ENCODE measurements at regions of chr19 and their contacts with region 1.

Region 1: DNA sequence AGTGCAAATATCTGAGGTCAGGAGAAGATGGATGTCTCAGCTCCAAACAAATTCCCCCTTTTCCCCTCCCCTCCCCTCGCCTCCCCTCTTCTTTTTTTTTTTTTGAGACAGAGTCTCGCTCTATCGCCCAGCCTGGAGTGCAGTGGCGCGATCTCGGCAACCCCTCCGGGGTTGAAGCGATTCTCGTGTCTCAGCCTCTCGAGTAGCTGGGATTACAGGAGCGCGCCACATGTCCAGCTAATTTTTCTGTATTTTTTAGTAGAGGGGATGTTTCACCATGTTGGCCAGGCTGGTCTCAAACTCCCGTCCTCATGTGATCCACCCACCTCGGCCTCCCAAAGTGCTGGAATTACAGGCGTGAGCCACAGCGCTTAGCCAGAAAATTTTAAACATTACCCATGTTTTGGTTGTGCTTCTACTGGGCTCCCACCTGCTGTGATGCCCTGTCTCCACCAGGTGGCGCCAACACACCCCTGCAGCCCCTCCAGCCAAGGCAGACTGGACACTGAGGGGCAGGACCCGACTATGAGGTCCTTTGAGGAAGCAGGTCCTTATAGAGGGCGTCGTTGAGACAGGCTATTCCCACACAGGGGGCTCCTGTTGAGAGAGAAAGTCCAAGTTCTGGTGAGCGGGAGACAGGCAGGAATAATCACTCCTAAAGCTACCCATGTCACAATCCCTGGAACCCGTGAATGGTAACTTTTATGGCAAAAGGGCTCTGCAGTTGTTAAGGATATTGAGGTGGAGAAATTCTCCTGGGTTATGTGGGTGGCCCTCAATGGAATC is 6.3 kb downstream of the ERICH4 start:
- DNase-seq: peak; percentile 77 to 89 (median 88)
- ATAC-seq: peak; percentile 92
- H3K4me3 ChIP-seq: peak overlapping the region; percentile 24
- H3K27ac ChIP-seq: no peak overlapping the region
- H3K4me1 ChIP-seq: no peaks in the 10 kb centered on the region
- H3K27me3 ChIP-seq: no peaks in the 10 kb centered on the region

Region 2: GRCh38 chr19:41386442-41386841 is 62.8 kb before region 1 on chr19:
- intact Hi-C with region 1: no loop called
- DNase-seq: no peak
- ATAC-seq: peak; percentile 19 to 22
- H3K4me3 ChIP-seq: no peak overlapping the region
- H3K27ac ChIP-seq: no peak overlapping the region
- H3K4me1 ChIP-seq: no peaks in the 10 kb centered on the region
- H3K27me3 ChIP-seq: no peaks in the 10 kb centered on the region

Region 3: DNA sequence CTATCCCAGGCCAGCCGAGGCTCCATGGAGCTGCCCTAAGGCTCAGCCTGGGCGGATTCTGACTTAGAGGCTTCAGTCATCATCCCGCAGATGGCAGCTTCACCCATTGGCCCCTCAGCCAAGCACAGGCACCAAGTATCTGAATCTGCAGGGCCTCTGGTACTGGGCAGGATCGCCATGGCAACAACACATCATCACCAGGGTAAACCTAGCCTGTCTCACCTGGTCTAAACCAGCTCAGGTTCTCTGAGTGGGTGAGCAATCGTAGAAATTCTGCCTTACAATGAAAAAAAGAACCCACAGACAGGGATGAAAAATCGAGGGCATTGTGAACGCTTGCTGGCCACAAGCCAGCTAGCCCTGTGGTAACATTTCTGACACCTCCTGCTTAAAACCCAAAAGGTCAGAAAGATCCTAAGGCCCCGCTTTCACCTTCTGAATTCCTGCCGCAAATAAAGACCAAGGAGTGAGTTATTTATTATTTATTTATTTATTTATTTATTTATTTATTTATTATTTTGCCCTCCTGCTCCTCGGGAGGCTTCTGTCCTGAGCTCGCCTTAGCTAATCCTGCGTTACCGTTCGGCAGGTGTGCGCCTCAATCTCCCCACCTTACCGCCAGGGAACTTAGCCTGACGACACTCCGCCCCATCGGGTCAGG is 114.7 kb after region 1 on chr19:
- intact Hi-C with region 1: loop called in 1 of 4 experiments (anchors 5 kb)
- DNase-seq: no peak
- ATAC-seq: no peak
- H3K4me3 ChIP-seq: no peak overlapping the region
- H3K27ac ChIP-seq: no peak overlapping the region
- H3K4me1 ChIP-seq: no peaks in the 10 kb centered on the region
- H3K27me3 ChIP-seq: no peaks in the 10 kb centered on the region

Region 4: DNA sequence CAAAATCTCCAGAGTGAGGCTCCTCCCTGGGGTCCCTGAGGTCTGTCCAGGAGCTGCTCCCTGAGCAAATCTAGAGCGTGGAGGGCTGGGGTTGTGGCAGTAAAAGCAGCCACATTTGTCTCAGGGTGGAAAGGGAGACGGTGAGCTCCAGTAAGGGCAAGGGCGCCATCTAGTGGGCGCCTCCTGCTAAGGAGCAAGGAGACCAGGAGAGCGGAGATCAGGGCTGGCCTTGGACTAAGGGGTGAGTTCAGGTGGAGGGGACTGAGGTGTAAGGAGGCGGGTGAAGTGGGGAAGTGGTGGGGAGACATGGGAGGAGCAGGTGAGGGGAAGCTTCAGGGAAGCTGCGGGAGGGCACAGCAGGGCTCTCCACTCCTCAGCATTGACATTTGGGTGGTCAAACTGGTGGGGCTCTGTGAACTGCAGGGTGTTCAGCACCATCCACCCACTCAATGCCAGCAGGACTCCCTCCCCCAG is 121.4 kb after region 1 on chr19:
- intact Hi-C with region 1: loop called in 3 of 4 experiments (anchors 5 kb)
- DNase-seq: peak; percentile 79 to 95 (median 91)
- ATAC-seq: peak; percentile 89 to 94
- H3K4me3 ChIP-seq: no peak overlapping the region
- H3K27ac ChIP-seq: no peak overlapping the region
- H3K4me1 ChIP-seq: no peaks in the 10 kb centered on the region
- H3K27me3 ChIP-seq: no peaks in the 10 kb centered on the region

Region 5: DNA sequence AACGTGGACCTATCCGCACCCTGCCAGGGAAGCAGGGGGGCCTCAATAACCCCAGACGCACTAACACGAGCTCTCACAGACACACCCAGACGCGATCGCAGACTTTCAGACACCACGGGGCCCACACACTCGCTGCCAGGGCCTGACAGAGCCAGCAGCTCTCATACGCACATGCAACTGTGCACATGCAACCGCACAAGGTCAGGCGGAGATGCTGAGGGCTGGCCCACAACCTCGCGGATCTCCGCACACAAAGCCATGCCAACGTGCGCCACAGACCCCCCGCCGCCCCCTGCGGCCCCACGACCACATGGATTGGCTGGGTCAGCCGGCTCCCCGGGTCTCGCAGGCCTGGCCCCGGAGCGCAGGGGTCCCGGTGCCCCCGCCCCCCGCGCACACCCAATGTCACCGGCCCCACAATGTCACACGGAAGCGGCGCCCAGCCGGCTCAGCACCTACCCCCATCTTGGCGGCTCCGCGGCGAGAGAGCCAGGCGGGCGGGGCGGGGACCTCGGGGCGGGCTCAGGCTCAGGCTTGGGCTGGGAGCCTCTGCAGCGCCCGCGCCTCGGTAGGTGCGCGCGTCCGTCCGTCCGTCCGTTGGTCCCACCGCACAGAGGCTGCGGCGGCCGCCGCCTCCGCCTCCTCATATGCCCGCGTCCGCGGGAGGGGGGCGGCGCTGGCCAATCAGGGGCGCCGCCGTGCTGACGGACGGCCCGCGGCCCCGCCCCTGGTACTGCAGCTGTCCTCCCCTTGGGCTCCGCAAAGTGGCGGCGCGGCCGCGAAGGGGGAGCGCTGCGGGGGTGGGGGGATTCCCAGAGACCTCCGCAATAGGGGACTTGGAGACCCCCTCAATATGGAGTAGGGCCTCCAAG is 544.6 kb after region 1 on chr19 and contains the start of gene ATP1A3:
- intact Hi-C with region 1: no loop called
- DNase-seq: peak; percentile 56 to 87 (median 84)
- ATAC-seq: peak; percentile 78 to 79
- H3K4me3 ChIP-seq: peak within 1 kb of the TSS; percentile 59
- H3K27ac ChIP-seq: peak within 1 kb of the TSS; percentile 66
- H3K4me1 ChIP-seq: no peaks in the 10 kb centered on the region
- H3K27me3 ChIP-seq: no peaks in the 10 kb centered on the region
- total RNA-seq, gene ATP1A3: 194 to 295 (median 234) TPM